Caki2 (cell line): ENCODE measurements at regions of chr2 and their contacts with region 1.

Region 1: GRCh38 chr2:191555092-191555742 is 122.7 kb upstream of the NABP1 start:
- DNase-seq: peak; percentile 73

Region 2: GRCh38 chr2:191421950-191422349 is 133.3 kb before region 1 on chr2:
- in situ Hi-C with region 1: no loop called
- DNase-seq: no peak

Region 3: GRCh38 chr2:191677646-191678436 is 122.6 kb after region 1 on chr2 and contains the start of gene NABP1:
- in situ Hi-C with region 1: loop called (anchors 25 kb)
- DNase-seq: peak; percentile 99
- total RNA-seq, gene NABP1: 13.9 and 18.7 TPM in 2 replicates

Region 4: DNA sequence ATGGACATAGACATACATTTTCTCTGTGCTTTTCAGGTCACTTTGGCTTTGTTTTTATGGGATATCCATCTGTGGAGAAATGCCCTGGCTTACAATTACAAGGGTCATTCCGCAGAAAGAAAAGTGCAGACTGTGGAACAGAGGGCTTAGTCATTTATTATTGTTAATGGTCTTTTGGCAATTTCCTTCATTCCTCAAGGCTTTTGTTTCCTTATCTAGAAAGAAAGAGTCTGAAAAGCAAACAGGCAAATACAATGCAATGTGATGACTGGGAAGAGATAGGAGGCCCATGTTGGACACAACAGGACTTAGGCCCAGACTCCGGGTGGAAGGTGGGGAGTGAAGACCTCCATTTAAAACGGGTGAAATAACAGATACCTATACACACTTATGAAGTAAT is 421.2 kb after region 1 on chr2:
- in situ Hi-C with region 1: loop called (anchors 25 kb)
- DNase-seq: peak; percentile 89

Region 5: GRCh38 chr2:192162392-192163042 is 607.3 kb after region 1 on chr2:
- in situ Hi-C with region 1: loop called (anchors 25 kb)
- DNase-seq: peak; percentile 64